ENCODE measurements at regions of chr2 and their contacts with region 1.

Region 1: GRCh38 chr2:54680397-54681041 is 42.9 kb upstream of the EML6 start:
- DNase-seq: peak; percentile 68
- H3K4me3 Mint-ChIP-seq: no peak overlapping the region
- H3K27ac Mint-ChIP-seq: peak overlapping the region; percentile 11
- H3K4me1 Mint-ChIP-seq: peaks cover 18% of the 10 kb centered on the region
- H3K27me3 Mint-ChIP-seq: peaks cover 37% of the 10 kb centered on the region

Region 2: GRCh38 chr2:54271843-54272627 is 408.5 kb before region 1 on chr2:
- CTCF ChIA-PET with region 1: no interaction called
- intact Hi-C with region 1: loop called (anchors 10 kb)
- DNase-seq: no peak
- H3K4me3 Mint-ChIP-seq: no peak overlapping the region
- H3K27ac Mint-ChIP-seq: no peak overlapping the region
- H3K4me1 Mint-ChIP-seq: peaks cover 15% of the 10 kb centered on the region
- H3K27me3 Mint-ChIP-seq: no peaks in the 10 kb centered on the region

Region 3: GRCh38 chr2:54657664-54658083 is 22.8 kb before region 1 on chr2:
- CTCF ChIA-PET with region 1: interaction called, 4 read pairs
- intact Hi-C with region 1: loop called (anchors 1 kb)
- DNase-seq: peak; percentile 58
- H3K4me3 Mint-ChIP-seq: no peak overlapping the region
- H3K27ac Mint-ChIP-seq: peak overlapping the region; percentile 60
- H3K4me1 Mint-ChIP-seq: peaks cover 18% of the 10 kb centered on the region
- H3K27me3 Mint-ChIP-seq: no peaks in the 10 kb centered on the region

Region 4: GRCh38 chr2:54763636-54764291 is 83.2 kb after region 1 on chr2:
- CTCF ChIA-PET with region 1: no interaction called
- intact Hi-C with region 1: loop called (anchors 1 kb)
- DNase-seq: peak; percentile 53
- H3K4me3 Mint-ChIP-seq: no peak overlapping the region
- H3K27ac Mint-ChIP-seq: no peak overlapping the region
- H3K4me1 Mint-ChIP-seq: peaks cover 12% of the 10 kb centered on the region
- H3K27me3 Mint-ChIP-seq: no peaks in the 10 kb centered on the region

Measured in activated naive CD4-positive, alpha-beta T cell treated with anti-CD3 and anti-CD28 coated beads for 36 hours (primary cell).